Activated CD4-positive, alpha-beta T cell treated with anti-CD3 and anti-CD28 coated beads, Interleukin-2, amount 10 ng/mL, durations not matched to agents 24 days and 14 days (primary cell): ENCODE measurements at regions of chr19 and their contacts with region 1.

Region 1: GRCh38 chr19:55141696-55142095 is 7.3 kb downstream of the TNNT1 start:
- DNase-seq: no peak
- H3K4me3 Mint-ChIP-seq: no peak overlapping the region
- H3K27ac Mint-ChIP-seq: no peak overlapping the region
- H3K4me1 Mint-ChIP-seq: peaks cover 10% of the 10 kb centered on the region
- H3K27me3 Mint-ChIP-seq: peaks cover 25% of the 10 kb centered on the region

Region 2: GRCh38 chr19:55178781-55179599 is 37.3 kb after region 1 on chr19:
- intact Hi-C with region 1: no loop called
- DNase-seq: peak; percentile 98
- H3K4me3 Mint-ChIP-seq: peak overlapping the region; percentile 79
- H3K27ac Mint-ChIP-seq: peak overlapping the region; percentile 63
- H3K4me1 Mint-ChIP-seq: peaks cover 20% of the 10 kb centered on the region
- H3K27me3 Mint-ChIP-seq: peaks cover 50% of the 10 kb centered on the region

Region 3: DNA sequence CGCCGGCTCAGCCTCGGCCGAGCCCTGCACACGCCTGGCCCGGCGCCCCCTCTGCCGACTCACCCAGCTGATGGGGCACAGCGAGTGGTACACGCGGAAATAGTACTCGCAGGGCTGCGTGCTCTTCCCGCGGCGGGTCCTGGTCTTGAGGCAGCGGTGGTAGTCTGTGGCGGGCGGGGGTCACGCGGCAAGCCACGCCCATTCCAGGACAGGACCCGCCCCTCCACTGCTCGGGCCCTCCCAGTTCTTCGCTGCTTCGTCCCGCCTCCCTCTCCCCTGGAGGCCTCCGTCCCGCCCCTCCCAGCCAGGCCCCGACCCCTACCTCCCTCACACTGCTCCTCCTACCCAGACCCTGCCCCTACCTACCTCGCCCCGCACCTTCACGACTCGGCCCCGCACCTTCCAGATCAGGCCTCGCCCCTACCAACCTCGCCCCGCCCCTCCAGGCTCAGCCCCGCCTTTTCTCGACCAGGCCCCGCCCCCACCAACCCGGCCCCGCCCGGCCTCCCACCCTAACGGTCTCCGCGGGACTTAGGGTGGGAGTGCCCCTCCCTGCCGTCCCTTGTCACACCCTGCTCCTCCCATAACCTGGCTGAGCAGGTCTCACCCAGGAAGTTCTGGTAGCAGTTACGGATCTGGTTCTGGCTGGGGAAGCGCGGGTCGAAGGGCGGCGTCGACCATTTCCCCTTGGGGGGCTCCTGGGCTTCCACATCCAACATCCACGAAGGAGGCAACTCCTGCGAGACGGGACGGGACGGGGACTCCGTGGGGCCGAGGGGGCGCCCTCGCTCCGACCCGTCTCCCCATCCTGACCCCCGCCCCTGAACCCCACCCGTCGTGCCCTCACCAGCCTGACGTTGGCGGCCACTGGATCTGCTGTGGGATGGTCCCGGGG is 212.4 kb after region 1 on chr19:
- intact Hi-C with region 1: no loop called
- DNase-seq: peak; percentile 89
- H3K4me3 Mint-ChIP-seq: peak overlapping the region; percentile 83
- H3K27ac Mint-ChIP-seq: no peak overlapping the region
- H3K4me1 Mint-ChIP-seq: peaks cover 22% of the 10 kb centered on the region
- H3K27me3 Mint-ChIP-seq: peaks cover 49% of the 10 kb centered on the region

Region 4: DNA sequence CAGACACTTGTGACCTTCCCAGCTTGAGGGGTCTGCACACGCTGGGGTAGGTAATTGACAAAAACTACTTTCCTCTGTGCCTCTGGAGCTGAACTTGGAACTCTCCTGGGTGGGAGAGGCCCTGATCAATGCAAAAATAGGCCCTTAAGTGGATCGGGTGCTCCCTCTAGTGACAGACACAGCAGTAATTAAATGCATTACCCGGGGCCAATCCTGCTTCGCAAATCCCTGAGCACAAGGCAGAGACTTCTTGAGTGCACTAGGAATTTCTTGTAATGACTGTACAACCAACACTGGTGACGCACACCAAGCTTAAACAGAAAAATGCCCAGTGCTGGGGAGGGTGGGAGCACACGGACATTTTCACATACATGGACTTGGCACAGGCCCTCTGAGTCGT is 276.5 kb after region 1 on chr19:
- intact Hi-C with region 1: loop called (anchors 1 kb)
- DNase-seq: peak; percentile 88
- H3K4me3 Mint-ChIP-seq: no peak overlapping the region
- H3K27ac Mint-ChIP-seq: no peak overlapping the region
- H3K4me1 Mint-ChIP-seq: peaks cover 10% of the 10 kb centered on the region
- H3K27me3 Mint-ChIP-seq: peaks cover 13% of the 10 kb centered on the region